Endothelial cell of umbilical vein (primary cell): ENCODE measurements at regions of chrX and their contacts with region 1.

Region 1: GRCh38 chrX:106874075-106874474 is 29.1 kb downstream of the RIPPLY1 start:
- DNase-seq: peak; percentile 35
- H3K4me3 ChIP-seq: no peak overlapping the region
- H3K27ac ChIP-seq: no peak overlapping the region
- H3K4me1 ChIP-seq: no peaks in the 10 kb centered on the region
- H3K27me3 ChIP-seq: no peaks in the 10 kb centered on the region
- CTCF ChIP-seq: peak in 1 of 2 donors; percentile 8
- POLR2A ChIP-seq: no peak

Region 2: DNA sequence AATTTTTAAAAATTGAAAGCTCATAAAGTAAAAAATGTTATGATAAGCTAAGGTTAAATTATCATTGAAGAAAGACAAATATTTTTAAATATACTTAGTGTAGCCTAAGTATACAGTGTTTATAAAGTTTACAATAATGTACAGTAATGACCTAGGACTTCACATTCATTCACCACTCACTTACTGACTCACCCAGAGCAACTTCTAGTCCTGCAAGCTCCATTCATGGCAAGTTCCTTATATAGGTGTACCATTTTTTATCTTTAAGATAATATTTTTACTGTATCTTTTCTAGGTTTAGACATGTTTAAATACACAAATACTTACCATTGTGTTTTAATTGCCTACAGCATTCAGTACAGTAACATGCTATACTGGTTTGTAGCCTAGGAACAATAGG is 374.6 kb before region 1 on chrX:
- CTCF ChIA-PET with region 1: no interaction called
- POLR2A ChIA-PET with region 1: no interaction called
- dilution Hi-C with region 1: no loop called
- intact Hi-C with region 1: no loop called
- DNase-seq: no peak
- H3K4me3 ChIP-seq: no peak overlapping the region
- H3K27ac ChIP-seq: no peak overlapping the region
- H3K4me1 ChIP-seq: no peaks in the 10 kb centered on the region
- H3K27me3 ChIP-seq: no peaks in the 10 kb centered on the region
- CTCF ChIP-seq: no peak
- POLR2A ChIP-seq: no peak

Region 3: GRCh38 chrX:106698693-106699092 is 175.4 kb before region 1 on chrX:
- CTCF ChIA-PET with region 1: no interaction called
- POLR2A ChIA-PET with region 1: no interaction called
- dilution Hi-C with region 1: no loop called
- intact Hi-C with region 1: no loop called
- DNase-seq: no peak
- H3K4me3 ChIP-seq: no peak overlapping the region
- H3K27ac ChIP-seq: no peak overlapping the region
- H3K4me1 ChIP-seq: no peaks in the 10 kb centered on the region
- H3K27me3 ChIP-seq: no peaks in the 10 kb centered on the region
- CTCF ChIP-seq: no peak
- POLR2A ChIP-seq: no peak

Region 4: GRCh38 chrX:106917830-106918500 is 43.9 kb after region 1 on chrX:
- CTCF ChIA-PET with region 1: no interaction called
- POLR2A ChIA-PET with region 1: no interaction called
- dilution Hi-C with region 1: no loop called
- intact Hi-C with region 1: no loop called
- DNase-seq: peak; percentile 86
- H3K4me3 ChIP-seq: no peak overlapping the region
- H3K27ac ChIP-seq: no peak overlapping the region
- H3K4me1 ChIP-seq: peaks cover 17% of the 10 kb centered on the region
- H3K27me3 ChIP-seq: peaks cover 3 to 17% of the 10 kb centered on the region in 2 experiments
- CTCF ChIP-seq: no peak
- POLR2A ChIP-seq: no peak

Region 5: GRCh38 chrX:106959901-106960300 is 85.8 kb after region 1 on chrX:
- CTCF ChIA-PET with region 1: interaction called, 28 read pairs
- POLR2A ChIA-PET with region 1: no interaction called
- dilution Hi-C with region 1: no loop called
- intact Hi-C with region 1: no loop called
- DNase-seq: peak; percentile 30
- H3K4me3 ChIP-seq: no peak overlapping the region
- H3K27ac ChIP-seq: no peak overlapping the region
- H3K4me1 ChIP-seq: no peaks in the 10 kb centered on the region
- H3K27me3 ChIP-seq: no peaks in the 10 kb centered on the region
- CTCF ChIP-seq: peak in 1 of 2 donors; percentile 12
- POLR2A ChIP-seq: no peak

Region 6: GRCh38 chrX:107324499-107325320 is 450.6 kb after region 1 on chrX:
- CTCF ChIA-PET with region 1: interaction called, 15 read pairs
- POLR2A ChIA-PET with region 1: no interaction called
- dilution Hi-C with region 1: no loop called
- intact Hi-C with region 1: no loop called
- DNase-seq: peak; percentile 2
- H3K4me3 ChIP-seq: no peak overlapping the region
- H3K27ac ChIP-seq: no peak overlapping the region
- H3K4me1 ChIP-seq: no peaks in the 10 kb centered on the region
- H3K27me3 ChIP-seq: no peaks in the 10 kb centered on the region
- CTCF ChIP-seq: no peak
- POLR2A ChIP-seq: no peak

Region 7: GRCh38 chrX:107978707-107979307 is 1104.7 kb after region 1 on chrX:
- CTCF ChIA-PET with region 1: no interaction called
- POLR2A ChIA-PET with region 1: no interaction called
- dilution Hi-C with region 1: no loop called
- intact Hi-C with region 1: loop called (anchors 5 kb)
- DNase-seq: peak; percentile 23
- H3K4me3 ChIP-seq: no peak overlapping the region
- H3K27ac ChIP-seq: no peak overlapping the region
- H3K4me1 ChIP-seq: no peaks in the 10 kb centered on the region
- H3K27me3 ChIP-seq: no peaks in the 10 kb centered on the region
- CTCF ChIP-seq: peak; percentile 26 to 40
- POLR2A ChIP-seq: no peak